GM18951 (cell line): ENCODE measurements at regions of chr22 and their contacts with region 1.

Region 1: GRCh38 chr22:49767355-49768062 is 60.2 kb downstream of the BRD1 start:
- POLR2A ChIP-seq: no peak

Region 2: DNA sequence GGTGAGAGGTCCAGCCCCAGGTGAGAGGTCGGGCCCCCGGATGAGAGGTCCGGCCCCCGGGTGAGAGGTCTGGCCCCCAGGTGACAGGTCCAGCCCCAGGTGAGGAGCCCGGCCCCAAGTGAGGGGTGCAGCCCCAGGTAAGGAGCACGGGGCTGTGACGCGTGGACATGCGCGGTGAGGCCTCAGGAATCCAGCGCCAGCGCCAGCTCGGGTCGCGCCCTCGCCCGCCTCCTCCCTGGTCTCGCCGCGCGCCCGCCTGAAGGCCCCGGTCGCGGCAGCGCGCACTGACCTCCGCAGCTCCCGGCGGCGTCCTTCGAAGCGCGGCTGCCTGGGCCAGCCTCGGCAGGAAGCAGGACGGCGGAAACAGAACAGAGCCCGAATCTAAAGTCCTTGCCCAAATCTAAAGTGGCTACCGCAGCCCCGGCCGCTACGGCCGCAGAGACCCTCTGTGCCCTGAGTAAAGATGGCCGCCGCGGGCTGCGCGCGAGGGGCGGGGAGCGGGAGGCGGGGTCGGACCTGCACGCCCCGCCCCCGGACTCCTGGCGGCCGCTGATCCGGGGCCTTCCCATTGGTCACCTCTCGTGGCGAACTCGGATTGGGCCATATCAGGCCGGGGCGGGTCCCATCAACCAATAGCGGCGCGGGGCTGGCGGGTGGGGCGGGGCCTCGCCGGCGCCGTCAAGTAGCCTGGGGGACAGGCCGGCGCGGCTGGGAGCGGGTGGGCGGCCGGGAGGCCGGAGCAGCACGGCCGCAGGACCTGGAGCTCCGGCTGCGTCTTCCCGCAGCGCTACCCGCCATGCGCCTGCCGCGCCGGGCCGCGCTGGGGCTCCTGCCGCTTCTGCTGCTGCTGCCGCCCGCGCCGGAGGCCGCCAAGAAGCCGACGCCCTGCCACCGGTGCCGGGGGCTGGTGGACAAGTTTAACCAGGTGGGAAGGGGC is 150.7 kb after region 1 on chr22 and contains the starts of genes ALG12 and CRELD2:
- in situ Hi-C with region 1: loop called (anchors 10 kb)
- POLR2A ChIP-seq: peak; percentile 91

Region 3: DNA sequence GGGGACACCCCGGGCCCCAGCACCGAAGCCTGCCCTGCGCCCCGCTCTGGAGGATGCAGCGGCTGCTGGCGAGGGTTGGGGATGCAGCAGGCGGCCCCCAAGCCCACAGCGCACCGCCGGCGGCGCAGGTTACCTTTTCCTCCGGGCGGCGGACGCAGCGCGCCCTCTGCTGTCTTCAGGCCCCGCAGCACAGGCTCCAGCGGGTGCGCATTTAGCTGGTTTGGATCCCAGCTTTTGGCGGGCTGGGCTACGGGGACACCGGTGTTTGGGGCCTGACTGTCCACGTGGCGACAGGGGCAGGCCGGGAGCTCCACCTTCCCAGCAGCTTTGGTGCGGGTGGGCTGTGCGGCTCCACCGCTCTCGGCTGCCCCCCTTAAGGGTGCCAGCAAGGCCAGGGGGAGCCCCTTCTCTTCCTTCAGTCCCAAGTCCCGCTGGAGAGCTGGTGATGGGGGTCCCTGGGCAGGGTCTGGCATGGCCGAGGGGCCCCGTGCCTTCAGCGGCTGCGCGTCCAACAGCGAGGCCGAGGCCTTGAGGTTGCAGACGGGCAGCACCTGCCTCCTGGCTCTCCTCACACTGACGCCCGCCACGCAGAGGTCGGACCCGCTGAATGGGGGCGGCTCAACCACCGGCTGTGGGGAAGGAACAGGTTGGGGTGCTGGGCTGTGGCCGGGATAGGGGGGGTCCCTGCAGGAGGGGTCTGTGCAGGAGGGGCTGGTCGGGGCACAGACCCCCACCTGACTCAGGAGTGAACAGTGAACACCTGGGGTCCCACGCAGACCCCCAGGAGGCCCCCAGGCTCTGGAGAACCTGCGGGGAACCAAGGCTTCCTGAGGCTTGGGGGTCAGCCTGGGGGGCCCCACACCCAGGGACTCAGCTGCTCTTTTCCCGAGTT is 263.0 kb after region 1 on chr22:
- in situ Hi-C with region 1: loop called (anchors 25 kb)
- POLR2A ChIP-seq: no peak

Region 4: DNA sequence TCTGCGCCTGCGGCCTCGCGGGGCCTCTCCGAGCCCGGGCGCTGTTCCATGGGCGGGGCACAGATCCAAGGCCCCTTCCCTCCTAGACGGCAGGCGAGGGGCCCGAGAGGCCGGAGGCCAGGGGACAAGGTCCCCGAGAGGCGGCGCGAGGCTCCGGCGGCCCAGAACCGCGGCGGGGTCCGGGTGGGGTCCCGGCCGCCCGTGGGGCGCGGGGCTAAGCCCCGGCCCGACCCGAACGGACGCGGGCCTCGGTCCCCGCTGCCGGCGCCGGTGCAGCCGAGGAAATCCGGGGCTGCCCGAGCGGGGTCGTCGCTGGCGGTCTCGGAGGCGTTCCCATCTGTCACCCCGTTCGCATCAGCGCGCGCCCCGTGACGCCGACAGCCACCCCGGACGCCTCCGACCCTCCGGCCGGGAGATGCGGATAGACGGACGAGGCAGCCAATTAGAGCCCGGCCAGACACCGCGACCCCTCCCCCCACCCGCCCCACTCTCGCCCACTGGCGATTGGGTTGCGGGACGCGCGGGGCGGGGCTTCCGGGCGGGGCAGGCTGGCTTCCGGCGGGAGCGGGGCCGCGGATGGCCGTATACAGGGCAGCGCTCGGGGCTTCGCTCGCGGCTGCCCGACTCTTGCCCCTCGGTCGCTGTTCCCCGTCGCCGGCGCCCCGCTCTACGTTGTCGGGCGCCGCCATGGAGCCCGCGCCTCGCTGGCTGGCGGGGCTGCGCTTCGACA is 433.1 kb after region 1 on chr22 and contains the start of gene SELENOO:
- in situ Hi-C with region 1: loop called (anchors 25 kb)
- POLR2A ChIP-seq: peak; percentile 83